Right ventricle myocardium inferior (tissue), 1 donor: ENCODE measurements at regions of chr11 and their contacts with region 1.

Region 1: DNA sequence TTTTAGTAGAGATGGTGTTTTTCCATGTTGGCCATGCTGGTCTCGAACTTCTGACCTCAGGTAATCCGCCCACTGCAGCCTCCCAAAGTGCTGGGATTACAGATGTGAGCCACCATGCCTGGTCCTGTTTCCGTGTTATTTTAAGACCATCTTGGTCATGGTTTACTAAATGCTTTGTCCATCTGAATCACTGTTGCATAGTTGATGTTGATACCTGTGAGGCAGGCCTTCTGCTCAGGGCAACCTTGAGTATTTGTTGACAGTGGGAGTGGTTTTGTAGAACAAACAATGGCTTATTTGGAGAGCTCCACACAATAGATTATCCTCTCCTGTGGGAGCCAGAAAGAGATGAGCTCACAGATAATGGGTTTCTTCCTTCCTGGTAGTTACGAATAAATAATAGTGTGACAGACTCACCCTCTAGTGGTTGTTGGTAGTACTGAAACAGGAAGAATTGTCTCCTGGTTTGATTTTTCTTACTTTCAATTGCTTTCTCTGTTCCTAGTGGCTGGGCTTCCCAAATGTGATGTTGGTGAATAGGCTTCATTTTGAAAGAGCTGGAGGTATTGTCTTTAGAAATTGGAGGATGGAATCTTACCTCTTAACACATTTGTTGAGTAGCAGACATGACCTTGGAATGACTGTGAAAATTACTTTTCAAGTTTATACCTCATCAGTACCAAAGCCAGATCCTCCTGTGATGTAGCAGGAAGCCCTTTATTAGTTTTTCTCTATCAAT is 39.0 kb downstream of the CTNND1 start:
- DNase-seq: no peak
- ATAC-seq: peak; percentile 70

Region 2: DNA sequence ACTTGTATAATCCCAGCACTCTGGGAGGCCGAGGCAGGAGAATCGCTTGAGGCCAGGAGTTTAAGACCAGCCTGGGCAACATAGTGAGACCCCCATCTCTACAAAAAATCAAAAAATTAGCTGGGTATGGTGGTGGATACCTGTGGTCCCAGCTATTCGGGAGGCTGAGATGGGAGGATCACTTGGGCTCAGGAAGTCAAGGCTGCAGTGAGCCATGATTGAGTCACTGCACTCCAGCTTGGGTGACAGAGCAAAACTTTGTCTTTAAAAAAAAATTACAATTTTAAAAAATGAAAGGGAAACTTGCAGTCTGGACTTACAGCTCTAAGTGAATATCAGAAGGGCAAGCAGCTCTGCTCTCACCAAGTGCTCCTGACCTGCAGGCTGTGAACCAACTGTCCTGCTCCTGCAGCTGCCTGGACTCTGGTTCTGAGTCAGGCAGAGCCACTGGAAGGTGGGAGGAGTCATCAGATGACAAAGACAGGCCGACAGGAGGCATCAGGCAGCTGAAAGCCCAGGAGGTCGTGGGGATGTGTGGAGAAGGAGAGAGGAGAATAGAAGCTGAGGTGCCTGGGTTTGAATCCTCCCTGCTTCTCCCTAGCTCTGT is 253.6 kb before region 1 on chr11:
- intact Hi-C with region 1: no loop called
- DNase-seq: no peak
- ATAC-seq: no peak

Region 3: DNA sequence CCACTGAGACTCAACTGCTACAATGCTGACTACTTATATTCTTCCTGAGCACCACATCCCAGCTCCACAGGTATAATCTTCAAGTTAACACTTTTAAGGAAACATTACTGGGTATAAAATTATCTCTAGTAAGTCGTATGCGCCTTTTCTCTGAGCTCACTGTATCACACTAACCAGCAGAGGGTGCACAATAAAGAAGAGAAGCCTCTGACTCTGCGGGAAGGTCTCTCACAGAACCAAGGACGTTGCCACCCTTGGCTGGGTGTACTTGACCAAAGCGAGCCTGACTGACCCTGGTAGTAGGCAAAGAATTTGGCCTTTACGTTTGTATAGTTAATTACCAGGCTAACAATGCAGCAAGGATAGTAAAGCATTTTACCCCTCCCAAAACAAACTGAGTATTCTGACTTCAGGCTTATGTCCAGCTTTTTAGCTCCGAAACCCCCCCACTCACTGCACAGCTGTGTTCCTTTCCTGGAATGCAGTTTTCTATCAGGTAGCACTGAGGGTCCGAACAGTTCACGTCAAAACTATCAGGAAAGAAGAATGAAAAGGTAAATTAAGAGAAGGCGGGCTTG is 48.8 kb before region 1 on chr11 and contains the start of gene BTBD18:
- intact Hi-C with region 1: loop called (anchors 2 kb)
- DNase-seq: no peak
- ATAC-seq: peak; percentile 81
- total RNA-seq, gene BTBD18: not detected

Region 4: GRCh38 chr11:57761301-57762234 is 39.0 kb before region 1 on chr11 and contains the start of gene CTNND1:
- intact Hi-C with region 1: loop called (anchors 2 kb)
- DNase-seq: peak; percentile 84
- ATAC-seq: peak; percentile 98
- total RNA-seq, gene CTNND1: 67.0 TPM

Region 5: DNA sequence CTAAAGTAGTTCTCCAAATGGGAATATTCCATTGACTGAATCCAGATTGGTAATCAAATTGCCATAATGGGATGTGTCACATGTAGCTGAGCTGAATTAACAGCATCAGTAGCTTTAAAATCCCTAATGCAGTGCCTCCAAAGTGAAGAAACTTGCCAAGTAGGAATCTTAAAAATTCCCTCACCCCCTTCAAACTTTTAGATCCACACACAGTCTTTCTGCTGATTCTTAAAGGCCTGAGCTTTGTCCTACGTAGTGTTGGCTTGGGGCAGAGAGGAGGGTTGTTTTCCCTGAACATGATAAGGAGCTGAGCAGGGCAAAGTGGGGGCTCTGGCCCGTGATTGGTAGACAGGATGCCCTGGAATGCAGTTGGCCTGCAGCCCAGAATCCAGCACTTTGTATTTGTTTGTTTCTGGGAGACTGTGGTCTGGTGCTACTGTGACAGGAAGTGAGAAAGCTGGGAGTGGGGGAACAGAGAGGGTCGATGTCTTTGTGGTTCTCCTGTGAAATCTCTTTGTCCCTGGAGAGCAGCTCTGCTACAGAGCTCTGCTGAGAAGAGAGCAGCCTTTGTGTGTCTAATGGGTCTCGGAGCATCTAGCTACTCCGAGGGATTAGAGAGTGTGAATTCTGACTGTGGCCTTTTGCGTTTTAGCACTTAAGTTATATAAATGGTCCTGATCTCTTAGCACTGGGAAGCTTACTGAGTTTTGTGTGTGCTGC is 22.1 kb before region 1 on chr11:
- intact Hi-C with region 1: loop called (anchors 2 kb)
- DNase-seq: peak; percentile 93
- ATAC-seq: peak; percentile 92

Region 6: DNA sequence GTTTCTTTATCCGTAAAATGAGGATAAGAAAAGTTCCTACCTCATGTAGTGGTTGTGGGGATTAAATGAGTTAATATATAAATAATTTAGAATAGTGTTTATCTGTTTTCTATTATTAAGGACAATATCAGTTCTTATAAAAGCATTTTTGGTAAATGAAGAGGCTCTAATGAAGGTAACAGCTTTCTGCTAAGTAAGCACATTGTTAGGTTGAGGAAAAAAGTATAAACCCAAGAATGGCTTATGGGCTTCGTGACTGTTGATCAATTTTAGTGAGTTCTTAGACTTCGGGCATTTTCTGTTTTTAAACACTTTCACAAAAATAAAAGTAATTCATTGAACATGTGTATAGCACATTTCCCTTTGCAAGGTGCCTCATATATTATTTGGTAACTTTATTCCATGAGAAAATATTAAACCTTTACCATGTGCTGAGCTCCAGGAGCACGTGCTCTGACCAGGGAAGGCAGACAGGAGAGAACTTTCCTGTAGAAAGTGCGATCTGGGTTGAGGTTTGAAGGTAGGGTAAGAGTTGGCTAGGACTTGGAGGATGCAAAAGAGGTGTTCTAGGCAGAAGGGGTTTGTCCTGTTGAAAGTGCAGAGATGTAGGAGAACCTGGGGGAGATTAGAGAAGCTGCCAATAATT is 376.9 kb after region 1 on chr11:
- intact Hi-C with region 1: no loop called
- DNase-seq: no peak
- ATAC-seq: no peak